ENCODE measurements at regions of chr6 and their contacts with region 1.

Region 1: GRCh38 chr6:36623547-36624459 is 29.6 kb downstream of the SRSF3 start:
- DNase-seq: peak; percentile 91
- H3K4me3 ChIP-seq: no peak overlapping the region
- H3K27ac ChIP-seq: peak overlapping the region in 4 of 8 donors; percentile 15 to 50 (median 38)
- H3K4me1 ChIP-seq: peaks cover 15 to 59% (median 50%) of the 10 kb centered on the region in 6 donors
- H3K27me3 ChIP-seq: no peaks in the 10 kb centered on the region
- CTCF ChIP-seq: peak; percentile 79 to 97 (median 92)
- POLR2A ChIP-seq: no peak

Region 2: GRCh38 chr6:36682328-36683144 is 58.7 kb after region 1 on chr6:
- intact Hi-C with region 1: loop called (anchors 2 kb)
- DNase-seq: peak; percentile 89
- H3K4me3 ChIP-seq: peak overlapping the region in 1 of 8 donors; percentile 1
- H3K27ac ChIP-seq: peak overlapping the region in 6 of 8 donors; percentile 3 to 77 (median 58)
- H3K4me1 ChIP-seq: peaks cover 28 to 93% (median 82%) of the 10 kb centered on the region in 6 donors
- H3K27me3 ChIP-seq: peaks cover 0 to 21% (median 0%) of the 10 kb centered on the region in 7 donors
- CTCF ChIP-seq: no peak
- POLR2A ChIP-seq: no peak

Region 3: GRCh38 chr6:36759148-36759759 is 135.5 kb after region 1 on chr6:
- intact Hi-C with region 1: loop called (anchors 5 kb)
- DNase-seq: peak; percentile 96
- H3K4me3 ChIP-seq: no peak overlapping the region
- H3K27ac ChIP-seq: peak overlapping the region in 3 of 8 donors; percentile 6 to 82 (median 10)
- H3K4me1 ChIP-seq: peaks cover 33 to 55% (median 51%) of the 10 kb centered on the region in 6 donors
- H3K27me3 ChIP-seq: no peaks in the 10 kb centered on the region
- CTCF ChIP-seq: peak; percentile 89 to 99 (median 94)
- POLR2A ChIP-seq: no peak

Region 4: GRCh38 chr6:36977470-36977941 is 353.7 kb after region 1 on chr6:
- intact Hi-C with region 1: no loop called
- DNase-seq: peak; percentile 63
- H3K4me3 ChIP-seq: no peak overlapping the region
- H3K27ac ChIP-seq: no peak overlapping the region
- H3K4me1 ChIP-seq: peaks cover 10 to 38% (median 32%) of the 10 kb centered on the region in 6 donors
- H3K27me3 ChIP-seq: no peaks in the 10 kb centered on the region
- CTCF ChIP-seq: peak in 8 of 11 experiments; percentile 13 to 56 (median 43)
- POLR2A ChIP-seq: no peak